Ascending aorta (tissue), 2 donors: ENCODE measurements at regions of chr18 and their contacts with region 1.

Region 1: DNA sequence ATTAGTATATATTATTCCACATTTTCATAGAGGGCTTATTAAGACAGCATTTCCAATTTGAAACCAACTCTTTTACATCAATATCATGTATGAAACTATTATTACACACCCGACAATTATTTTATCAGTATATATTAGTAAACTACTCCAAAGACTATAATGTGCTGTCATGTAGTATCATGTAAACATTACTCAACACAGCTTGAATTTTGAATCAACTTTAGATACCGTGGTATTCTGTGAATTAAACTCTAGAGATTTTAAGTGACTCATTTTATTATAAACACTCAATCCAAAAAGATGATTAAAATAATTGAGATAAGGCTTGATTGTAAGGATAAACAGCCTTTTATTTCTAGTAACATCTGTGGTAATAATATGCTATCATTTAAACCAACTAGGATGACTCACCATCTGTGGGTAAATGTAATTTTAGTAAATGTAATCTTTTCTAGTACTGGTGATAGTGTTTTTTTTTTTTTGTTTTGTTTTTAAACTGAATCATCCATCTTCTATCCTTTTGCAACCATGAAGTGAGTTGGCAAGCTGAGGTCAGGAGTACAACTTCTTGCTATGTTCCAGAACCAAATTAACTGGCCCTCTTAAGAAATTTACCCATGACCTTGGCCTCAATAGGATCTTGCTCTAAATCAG is 144.3 kb upstream of the SMAD7 start:
- DNase-seq: no peak
- H3K4me3 ChIP-seq: no peak overlapping the region
- H3K27ac ChIP-seq: peak overlapping the region in 1 of 2 donors; percentile 43
- H3K4me1 ChIP-seq: peaks cover 0 to 7% of the 10 kb centered on the region in 2 donors
- H3K27me3 ChIP-seq: no peaks in the 10 kb centered on the region
- CTCF ChIP-seq: no peak

Region 2: DNA sequence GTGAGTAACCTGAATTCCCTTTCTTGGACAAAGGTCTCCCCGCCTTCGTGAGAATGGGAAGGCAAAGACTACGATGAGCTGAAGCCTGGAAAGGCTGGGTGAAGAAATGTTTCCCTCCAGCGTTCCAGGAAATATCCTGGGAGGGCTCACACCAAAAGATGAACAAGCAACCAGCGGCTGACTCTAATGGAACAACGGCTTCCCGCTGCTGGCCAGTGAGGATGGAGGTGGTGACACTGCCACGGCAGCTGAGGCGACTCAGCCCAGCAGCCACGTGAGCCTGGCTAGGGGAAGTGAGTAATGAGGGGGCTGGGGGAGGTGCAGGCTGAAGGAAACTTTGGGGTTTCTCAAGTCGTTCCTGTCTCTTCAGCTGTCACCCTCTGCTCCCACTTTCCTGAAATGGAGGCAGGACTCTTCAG is 39.3 kb before region 1 on chr18:
- intact Hi-C with region 1: loop called (anchors 5 kb)
- DNase-seq: peak; percentile 32 to 91
- H3K4me3 ChIP-seq: no peak overlapping the region
- H3K27ac ChIP-seq: peak overlapping the region; percentile 55 to 73
- H3K4me1 ChIP-seq: peaks cover 8 to 18% of the 10 kb centered on the region in 2 donors
- H3K27me3 ChIP-seq: no peaks in the 10 kb centered on the region
- CTCF ChIP-seq: no peak

Region 3: DNA sequence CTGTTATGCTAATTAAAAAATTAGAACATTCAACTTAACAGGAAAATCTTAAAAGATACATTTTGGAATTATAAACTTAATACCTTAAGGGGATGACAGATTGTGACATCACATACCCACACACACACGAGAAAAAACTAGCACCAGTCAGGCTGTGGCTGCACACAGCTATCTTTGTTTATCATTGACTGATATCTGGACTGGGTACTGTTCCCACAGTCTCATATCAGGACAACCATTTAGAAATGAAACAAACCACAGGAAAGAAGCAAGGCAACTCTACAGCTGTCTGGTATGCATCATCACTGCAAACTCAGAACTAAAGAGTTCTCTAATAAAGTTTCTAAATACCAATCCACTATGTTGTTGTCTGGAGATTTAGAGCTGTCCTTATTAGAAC is 66.5 kb after region 1 on chr18:
- intact Hi-C with region 1: loop called (anchors 5 kb)
- DNase-seq: no peak
- H3K4me3 ChIP-seq: no peak overlapping the region
- H3K27ac ChIP-seq: peak overlapping the region in 1 of 2 donors; percentile 74
- H3K4me1 ChIP-seq: peaks cover 0 to 4% of the 10 kb centered on the region in 2 donors
- H3K27me3 ChIP-seq: no peaks in the 10 kb centered on the region
- CTCF ChIP-seq: no peak